Ascending aorta (tissue), 2 donors: ENCODE measurements at regions of chr19 and their contacts with region 1.

Region 1: DNA sequence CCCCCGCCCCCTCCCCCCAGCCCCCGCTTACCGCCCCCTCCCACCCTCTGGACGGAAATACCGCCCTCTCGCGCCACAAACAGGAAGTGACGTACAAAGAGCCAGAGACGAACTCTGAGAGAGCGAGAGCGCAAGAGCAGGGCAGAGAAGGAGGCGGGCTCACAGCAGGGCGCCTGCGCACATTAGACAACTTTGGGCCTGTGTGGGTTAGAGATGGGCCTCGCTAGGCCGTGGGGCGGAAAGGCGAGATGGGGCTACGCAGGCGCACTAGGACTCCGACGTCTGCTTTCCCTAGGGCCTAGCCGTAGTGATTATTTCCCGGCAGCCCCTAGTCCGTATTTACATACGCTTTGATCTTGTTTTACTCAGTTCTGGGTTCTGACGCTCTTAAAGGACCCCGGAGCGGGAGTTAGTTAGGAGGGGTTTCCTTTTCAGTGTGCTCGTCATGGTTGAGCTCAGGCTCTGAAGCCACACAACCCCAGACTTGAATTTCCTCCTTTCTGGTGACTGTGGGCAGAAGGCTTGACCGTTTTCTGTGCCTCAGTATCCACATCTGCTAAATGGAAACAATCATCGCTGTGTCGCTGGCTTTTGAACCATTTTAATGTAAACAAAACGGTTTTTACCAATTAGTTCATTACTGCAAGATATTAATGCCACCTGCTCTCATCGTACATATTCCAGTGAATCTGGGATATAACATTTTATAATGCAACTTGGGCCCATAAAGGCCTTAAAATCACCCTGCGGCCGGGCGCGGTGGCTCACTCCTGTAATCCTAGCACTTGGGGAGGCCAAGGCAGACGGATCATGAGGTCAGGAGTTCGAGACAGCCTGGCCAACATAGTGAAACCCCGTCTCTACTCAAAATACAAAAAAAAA is 449 bp upstream of the AKT2 start:
- DNase-seq: peak; percentile 97 to 99
- H3K4me3 ChIP-seq: peak overlapping the region; percentile 71 to 83
- H3K27ac ChIP-seq: peak overlapping the region; percentile 84 to 97
- H3K4me1 ChIP-seq: peaks cover 6 to 25% of the 10 kb centered on the region in 2 donors
- H3K27me3 ChIP-seq: no peaks in the 10 kb centered on the region
- CTCF ChIP-seq: no peak

Region 2: GRCh38 chr19:40221858-40222837 is 63.4 kb before region 1 on chr19:
- intact Hi-C with region 1: loop called (anchors 5 kb)
- DNase-seq: peak; percentile 55 to 90
- H3K4me3 ChIP-seq: no peak overlapping the region
- H3K27ac ChIP-seq: no peak overlapping the region
- H3K4me1 ChIP-seq: peaks cover 3 to 9% of the 10 kb centered on the region in 2 donors
- H3K27me3 ChIP-seq: peaks cover 29% of the 10 kb centered on the region
- CTCF ChIP-seq: peak; percentile 87 to 96 (median 92)

Region 3: DNA sequence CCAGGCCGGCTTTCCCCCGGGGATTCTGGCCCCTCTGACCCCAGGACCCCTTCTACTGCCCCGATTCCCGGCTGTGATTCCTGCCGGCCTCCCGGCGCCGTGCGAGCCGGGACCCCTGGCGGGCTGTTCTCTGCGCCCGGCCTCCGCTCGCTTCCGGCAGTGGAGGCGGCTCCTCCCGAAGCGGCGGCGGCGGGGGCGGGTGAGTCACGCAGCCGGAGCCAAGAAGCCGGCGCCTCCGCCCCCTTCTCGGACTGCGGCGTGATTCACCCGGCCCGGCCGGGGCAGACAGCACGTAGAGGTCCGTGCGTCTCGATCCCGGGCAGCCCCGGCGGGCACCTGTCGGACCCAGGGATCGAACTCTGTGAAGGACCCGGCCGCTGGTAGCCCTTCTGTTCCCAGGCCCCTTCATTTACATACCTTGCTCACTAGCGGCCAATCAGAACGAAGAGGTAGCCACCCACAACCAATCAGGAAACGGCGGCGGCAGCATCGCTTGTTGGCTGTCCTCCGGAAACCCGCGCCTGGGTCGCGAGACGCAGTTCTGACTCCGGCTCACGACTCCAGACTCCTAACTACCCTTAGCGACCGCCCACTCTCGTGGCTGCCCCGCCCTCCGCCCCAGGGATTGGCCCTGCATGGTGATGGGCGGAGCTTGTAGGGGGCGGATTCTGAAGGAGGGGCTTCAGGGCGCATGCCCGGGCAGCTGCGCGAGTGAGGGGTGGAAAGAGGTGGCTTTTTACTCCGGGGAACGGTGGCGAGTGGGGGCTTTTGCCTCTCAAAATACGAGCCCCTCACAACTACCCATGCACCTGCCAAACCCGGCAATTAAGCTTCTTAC is 140.1 kb after region 1 on chr19 and contains the start of gene SERTAD1:
- intact Hi-C with region 1: loop called (anchors 5 kb)
- DNase-seq: peak; percentile 99 to 100
- H3K4me3 ChIP-seq: peak within 1 kb of the TSS; percentile 62 to 83
- H3K27ac ChIP-seq: peak within 1 kb of the TSS; percentile 98 to 99
- H3K4me1 ChIP-seq: peaks cover 14 to 30% of the 10 kb centered on the region in 2 donors
- H3K27me3 ChIP-seq: no peaks in the 10 kb centered on the region
- CTCF ChIP-seq: peak; percentile 75 to 86 (median 85)
- total RNA-seq, gene SERTAD1: 39.7 TPM

Region 4: GRCh38 chr19:40472516-40472915 is 186.9 kb after region 1 on chr19:
- intact Hi-C with region 1: no loop called
- DNase-seq: no peak
- H3K4me3 ChIP-seq: no peak overlapping the region
- H3K27ac ChIP-seq: no peak overlapping the region
- H3K4me1 ChIP-seq: peaks cover 0 to 2% of the 10 kb centered on the region in 2 donors
- H3K27me3 ChIP-seq: no peaks in the 10 kb centered on the region
- CTCF ChIP-seq: no peak

Region 5: DNA sequence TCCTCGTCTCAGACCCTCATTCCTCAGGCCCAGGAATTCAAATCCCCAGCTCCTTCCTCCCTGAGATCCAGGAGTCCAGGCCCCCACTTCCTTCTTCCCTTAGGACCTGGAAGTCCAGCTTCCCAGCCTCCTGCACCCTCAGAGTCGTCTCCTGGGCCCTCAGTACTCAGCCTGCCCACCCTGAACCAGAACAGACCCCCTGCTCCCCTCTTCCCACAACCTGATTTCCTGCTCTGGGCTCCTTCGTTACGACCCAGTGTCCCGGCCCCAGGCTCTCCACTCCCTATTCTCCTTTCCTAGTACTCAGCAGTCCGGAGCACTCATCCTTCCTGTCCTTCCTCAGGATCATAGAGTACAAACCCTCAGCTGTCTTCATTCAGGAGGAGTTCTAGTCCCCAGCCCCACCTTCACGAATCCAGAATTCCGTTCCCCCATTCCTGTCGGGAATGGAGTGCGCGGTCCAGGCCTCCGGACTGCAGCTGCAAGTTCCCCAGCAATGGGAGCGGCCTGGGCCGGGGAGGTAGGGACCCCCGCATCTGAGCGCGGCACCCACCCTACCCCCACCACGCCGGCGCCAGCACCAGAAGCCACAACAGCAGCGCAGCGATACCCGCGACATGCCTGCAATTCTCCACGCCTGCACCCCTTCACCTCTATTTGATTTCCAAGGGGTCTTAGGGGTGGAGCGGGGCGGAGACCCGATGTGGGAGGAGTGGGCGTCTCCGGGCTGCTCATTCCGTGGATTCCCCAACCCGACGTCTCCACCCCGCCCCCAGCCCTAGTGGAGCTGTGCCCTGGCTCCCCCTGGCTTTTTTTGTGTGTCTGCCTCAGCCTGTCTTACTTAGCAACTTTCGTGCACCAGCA is 526.1 kb after region 1 on chr19:
- intact Hi-C with region 1: loop called (anchors 10 kb)
- DNase-seq: no peak
- H3K4me3 ChIP-seq: peak overlapping the region; percentile 51 to 64
- H3K27ac ChIP-seq: peak overlapping the region; percentile 63 to 71
- H3K4me1 ChIP-seq: peaks cover 0 to 29% of the 10 kb centered on the region in 2 donors
- H3K27me3 ChIP-seq: no peaks in the 10 kb centered on the region
- CTCF ChIP-seq: no peak